IMR-90 (cell line): ENCODE measurements at regions of chr12 and their contacts with region 1.

Region 1: GRCh38 chr12:32605034-32605719 is 73.9 kb upstream of the DNM1L start:
- DNase-seq: no peak
- ATAC-seq: no peak
- H3K4me3 ChIP-seq: no peak overlapping the region
- H3K27ac ChIP-seq: no peak overlapping the region
- H3K4me1 ChIP-seq: no peaks in the 10 kb centered on the region
- H3K27me3 ChIP-seq: no peaks in the 10 kb centered on the region
- CTCF ChIP-seq: no peak
- POLR2A ChIP-seq: no peak
- RAD21 ChIP-seq: no peak

Region 2: GRCh38 chr12:32617534-32617933 is 12.4 kb after region 1 on chr12:
- CTCF ChIA-PET with region 1: interaction called, 4 read pairs
- POLR2A ChIA-PET with region 1: no interaction called
- dilution Hi-C with region 1: no loop called
- in situ Hi-C with region 1: no loop called
- intact Hi-C with region 1: loop called (anchors 1 kb)
- DNase-seq: no peak
- ATAC-seq: no peak
- H3K4me3 ChIP-seq: no peak overlapping the region
- H3K27ac ChIP-seq: no peak overlapping the region
- H3K4me1 ChIP-seq: no peaks in the 10 kb centered on the region
- H3K27me3 ChIP-seq: no peaks in the 10 kb centered on the region
- CTCF ChIP-seq: no peak
- POLR2A ChIP-seq: no peak
- RAD21 ChIP-seq: no peak